OCI-LY7 (cell line): ENCODE measurements at regions of chr20 and their contacts with region 1.

Region 1: DNA sequence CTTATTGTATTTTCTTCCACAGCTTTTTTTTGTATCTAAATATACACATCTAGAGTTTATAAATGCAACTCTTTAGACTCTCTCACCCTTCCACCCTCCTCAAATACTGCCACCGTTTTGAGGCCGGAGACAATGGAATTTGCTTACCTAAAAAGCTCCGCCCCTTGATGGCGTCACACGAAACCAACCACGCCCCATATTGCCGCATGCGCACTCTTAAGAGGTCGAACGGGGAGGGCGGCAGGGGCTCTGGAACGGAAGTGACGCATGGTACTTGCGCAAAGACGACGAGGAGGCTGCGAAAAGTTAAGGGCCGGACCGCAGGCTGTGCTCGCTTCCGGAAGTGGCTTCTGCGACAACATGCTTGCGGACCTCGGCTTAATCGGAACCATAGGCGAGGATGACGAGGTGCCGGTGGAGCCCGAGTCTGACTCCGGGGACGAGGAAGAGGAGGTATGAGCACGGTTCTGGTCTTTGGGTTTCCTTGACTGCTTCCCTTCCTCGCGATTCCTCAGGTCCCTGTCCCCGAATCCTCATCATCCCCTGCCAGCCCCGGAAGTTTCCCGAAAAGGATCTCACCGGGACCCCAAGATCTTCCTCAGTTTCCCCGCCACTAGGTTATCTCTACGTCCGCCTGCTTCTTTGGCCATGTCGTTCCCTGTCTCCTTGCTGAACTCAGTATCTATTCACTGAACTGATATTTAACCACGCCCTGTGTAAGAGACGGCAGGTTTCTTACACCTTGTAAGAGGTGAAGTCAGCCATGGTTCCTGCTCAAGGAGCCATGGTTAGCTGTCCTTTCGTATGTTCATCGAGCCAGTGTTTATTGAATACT is at the start of gene DDX27:
- DNase-seq: peak; percentile 99
- H3K4me3 ChIP-seq: peak within 1 kb of the TSS; percentile 86
- H3K27ac ChIP-seq: peak within 1 kb of the TSS; percentile 65
- H3K4me1 ChIP-seq: peaks cover 24% of the 10 kb centered on the region
- CTCF ChIP-seq: no peak
- total RNA-seq, gene DDX27: 48.2 and 53.9 TPM in 2 replicates

Region 2: GRCh38 chr20:49046087-49046900 is 173.0 kb before region 1 on chr20 and contains the start of gene CSE1L:
- CTCF ChIA-PET with region 1: no interaction called
- POLR2A ChIA-PET with region 1: no interaction called
- intact Hi-C with region 1: loop called (anchors 5 kb)
- DNase-seq: peak; percentile 96
- H3K4me3 ChIP-seq: peak within 1 kb of the TSS; percentile 96
- H3K27ac ChIP-seq: peak within 1 kb of the TSS; percentile 88
- H3K4me1 ChIP-seq: peaks cover 22% of the 10 kb centered on the region
- CTCF ChIP-seq: no peak
- total RNA-seq, gene CSE1L: 90.2 and 104 TPM in 2 replicates

Region 3: DNA sequence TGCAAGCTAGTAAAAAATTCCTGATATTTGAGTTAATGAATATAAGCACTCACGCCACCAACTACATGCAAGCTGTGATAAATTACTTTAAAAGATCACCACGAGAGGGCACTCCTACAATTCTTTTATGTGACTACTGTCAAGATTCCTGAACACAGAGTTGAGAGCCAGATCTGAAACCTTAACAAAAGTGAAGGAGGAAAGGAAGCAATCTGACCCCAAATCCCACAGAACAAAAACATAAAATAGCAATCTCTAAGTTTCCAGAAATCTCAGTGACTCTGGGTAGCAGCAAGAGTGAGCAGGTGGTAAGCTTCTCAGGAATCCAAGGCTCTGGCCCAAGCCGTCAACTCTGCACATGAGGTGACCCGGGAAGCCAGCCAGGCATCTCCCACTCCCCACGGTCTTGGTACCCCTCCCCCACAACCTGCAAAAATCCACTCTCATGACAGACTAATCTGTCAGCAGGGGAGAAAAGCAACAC is 86.3 kb before region 1 on chr20:
- CTCF ChIA-PET with region 1: interaction called, 3 read pairs
- POLR2A ChIA-PET with region 1: interaction called, 7 read pairs
- intact Hi-C with region 1: loop called (anchors 1 kb)
- DNase-seq: peak; percentile 76
- H3K4me3 ChIP-seq: no peak overlapping the region
- H3K27ac ChIP-seq: no peak overlapping the region
- H3K4me1 ChIP-seq: no peaks in the 10 kb centered on the region
- CTCF ChIP-seq: peak; percentile 92

Region 4: DNA sequence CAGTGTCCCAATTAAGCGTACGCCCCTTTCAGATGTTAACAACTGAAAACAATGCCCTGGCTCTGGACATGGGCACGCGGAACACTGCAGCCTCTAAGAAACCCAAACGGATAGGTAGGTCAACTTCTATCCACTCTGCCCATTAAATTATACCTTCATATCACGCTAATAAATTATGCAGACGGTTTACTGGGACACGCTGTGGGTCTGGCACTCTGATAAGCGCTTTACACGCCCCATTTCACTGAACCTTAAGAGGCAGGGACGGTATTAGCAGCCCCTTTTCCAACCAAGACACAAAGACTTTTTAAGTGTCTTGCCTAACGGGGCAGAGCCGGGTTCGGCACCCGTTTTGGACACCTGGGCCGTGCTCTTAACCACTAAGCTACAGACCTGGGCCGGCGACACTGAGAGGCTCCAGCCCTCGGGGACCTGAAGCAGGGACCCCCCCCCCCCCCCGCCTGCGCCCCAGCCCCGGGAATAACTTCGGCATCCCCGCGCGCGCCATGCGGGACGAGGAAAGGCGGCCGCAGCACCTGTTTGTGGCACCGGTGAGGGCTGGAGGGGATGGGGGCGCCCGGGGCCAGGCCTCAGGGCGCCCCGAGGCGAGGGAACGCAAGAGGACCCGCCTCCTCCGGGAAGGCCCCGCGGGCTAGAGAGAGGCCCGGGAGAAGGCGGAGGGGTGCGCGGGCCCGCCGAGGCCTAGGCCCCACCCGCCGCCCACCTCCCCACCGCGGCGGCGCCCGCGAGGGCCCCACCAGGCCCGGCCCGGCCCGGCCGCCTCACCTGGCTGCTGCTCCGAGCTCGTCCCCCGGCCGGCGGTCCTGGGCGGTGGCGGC is 31.8 kb before region 1 on chr20:
- CTCF ChIA-PET with region 1: no interaction called
- POLR2A ChIA-PET with region 1: interaction called, 4 read pairs
- intact Hi-C with region 1: loop called (anchors 1 kb)
- DNase-seq: peak; percentile 52
- H3K4me3 ChIP-seq: peak overlapping the region; percentile 75
- H3K27ac ChIP-seq: peak overlapping the region; percentile 47
- H3K4me1 ChIP-seq: peaks cover 30% of the 10 kb centered on the region
- CTCF ChIP-seq: no peak

Region 5: DNA sequence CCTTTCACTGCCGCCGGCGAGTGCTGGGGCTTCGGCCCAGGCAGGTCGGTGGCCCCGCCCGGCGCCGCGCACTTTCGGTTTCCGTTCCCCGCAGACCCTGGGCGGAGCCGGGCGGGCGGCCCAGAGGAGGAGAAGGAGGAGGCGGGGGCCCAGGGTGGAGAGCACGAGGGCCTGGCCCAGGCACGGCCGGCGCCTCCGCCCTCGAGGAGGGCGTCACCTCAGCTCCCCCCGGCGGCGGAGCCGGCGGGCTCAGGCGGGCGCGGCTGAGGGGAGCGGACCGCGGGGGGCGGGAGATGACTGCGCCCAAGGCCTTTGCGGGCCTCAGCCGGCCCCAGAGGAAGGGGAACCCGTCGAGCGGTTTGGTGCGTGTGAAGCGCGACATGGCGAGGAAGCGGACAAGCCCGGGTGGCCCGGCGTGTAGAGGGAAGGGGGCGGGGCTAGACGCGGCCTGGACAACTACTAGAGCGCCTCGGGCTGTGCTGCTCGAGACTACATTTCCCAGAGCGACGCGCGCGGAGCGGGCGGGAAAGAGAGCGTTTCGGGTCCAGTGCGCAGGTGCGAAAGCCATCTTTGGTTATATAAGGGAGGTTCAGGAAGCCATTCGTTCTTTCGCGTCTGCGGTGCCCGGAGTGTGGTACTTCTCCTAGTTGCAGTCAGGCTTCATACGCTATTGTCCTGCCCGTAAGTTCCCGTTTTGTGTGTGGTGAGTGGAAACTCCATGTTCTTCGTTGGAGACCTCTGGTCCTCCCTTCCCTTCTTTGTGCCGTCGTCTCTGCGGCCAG is 58.9 kb after region 1 on chr20 and contains the start of gene ZNFX1:
- CTCF ChIA-PET with region 1: no interaction called
- POLR2A ChIA-PET with region 1: no interaction called
- intact Hi-C with region 1: loop called (anchors 2 kb)
- DNase-seq: peak; percentile 99
- H3K4me3 ChIP-seq: peak within 1 kb of the TSS; percentile 100
- H3K27ac ChIP-seq: peak within 1 kb of the TSS; percentile 90
- H3K4me1 ChIP-seq: peaks cover 50% of the 10 kb centered on the region
- CTCF ChIP-seq: 0 out of 2 replicates have a peak, but pooled peaks have one; percentile 3
- total RNA-seq, gene ZNFX1: 14.9 and 15.1 TPM in 2 replicates